ENCODE measurements at regions of chr12 and their contacts with region 1.

Region 1: GRCh38 chr12:28296287-28296686 is 106.0 kb downstream of the CCDC91 start:
- DNase-seq: no peak
- ATAC-seq: no peak
- H3K4me3 ChIP-seq: no peak overlapping the region
- H3K27ac ChIP-seq: no peak overlapping the region
- H3K4me1 ChIP-seq: no peaks in the 10 kb centered on the region
- H3K27me3 ChIP-seq: no peaks in the 10 kb centered on the region
- CTCF ChIP-seq: no peak
- POLR2A ChIP-seq: no peak
- RAD21 ChIP-seq: no peak

Region 2: GRCh38 chr12:28258998-28259397 is 37.3 kb before region 1 on chr12:
- CTCF ChIA-PET with region 1: no interaction called
- POLR2A ChIA-PET with region 1: no interaction called
- dilution Hi-C with region 1: no loop called
- in situ Hi-C with region 1: no loop called
- intact Hi-C with region 1: loop called (anchors 5 kb)
- DNase-seq: peak; percentile 49
- ATAC-seq: no peak
- H3K4me3 ChIP-seq: no peak overlapping the region
- H3K27ac ChIP-seq: no peak overlapping the region
- H3K4me1 ChIP-seq: peaks cover 4% of the 10 kb centered on the region
- H3K27me3 ChIP-seq: no peaks in the 10 kb centered on the region
- CTCF ChIP-seq: no peak
- POLR2A ChIP-seq: no peak
- RAD21 ChIP-seq: no peak